Mammary epithelial cell (primary cell): ENCODE measurements at regions of chr11 and their contacts with region 1.

Region 1: DNA sequence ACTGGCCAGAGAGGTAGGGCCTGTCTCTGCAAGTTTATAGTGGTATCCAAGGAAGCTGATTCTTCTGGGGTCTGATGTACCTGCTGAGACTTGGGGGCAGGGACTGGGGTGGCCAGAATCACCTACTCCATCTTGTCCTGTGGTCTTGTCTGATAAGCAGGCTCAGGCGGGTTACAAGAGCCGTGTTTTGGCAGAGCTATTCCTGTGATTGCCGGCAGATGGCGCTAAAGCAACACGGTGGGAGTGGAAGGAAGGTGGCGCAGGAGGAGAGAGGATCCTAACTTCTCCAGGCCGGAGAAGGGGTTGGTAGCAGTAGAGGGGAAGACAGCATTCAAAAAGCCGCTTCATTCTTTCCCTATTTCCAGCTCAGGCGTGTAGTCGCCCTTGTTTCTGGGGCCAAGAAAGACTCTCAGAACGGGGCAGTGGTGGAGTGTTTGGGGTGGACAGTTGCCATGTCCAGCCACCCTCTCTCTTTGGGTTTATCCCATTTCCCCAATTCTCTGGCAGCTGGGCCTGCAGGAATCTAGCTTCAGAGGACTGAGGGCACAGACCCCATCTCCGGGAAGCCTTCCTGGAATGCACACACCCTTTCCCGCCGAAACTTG is 15.1 kb downstream of the CHRM1 start:
- DNase-seq: peak; percentile 69
- H3K4me3 ChIP-seq: no peak overlapping the region
- H3K27ac ChIP-seq: no peak overlapping the region
- H3K4me1 ChIP-seq: peaks cover 4% of the 10 kb centered on the region
- H3K27me3 ChIP-seq: no peaks in the 10 kb centered on the region
- CTCF ChIP-seq: peak; percentile 99 to 100

Region 2: GRCh38 chr11:62831520-62832335 is 74.3 kb before region 1 on chr11 and contains the start of gene STX5:
- CTCF ChIA-PET with region 1: no interaction called
- dilution Hi-C with region 1: no loop called
- in situ Hi-C with region 1: no loop called
- intact Hi-C with region 1: no loop called
- DNase-seq: peak; percentile 97
- H3K4me3 ChIP-seq: peak within 1 kb of the TSS; percentile 59 to 84 (median 75)
- H3K27ac ChIP-seq: peak within 1 kb of the TSS; percentile 87
- H3K4me1 ChIP-seq: peaks cover 19% of the 10 kb centered on the region
- H3K27me3 ChIP-seq: no peaks in the 10 kb centered on the region
- CTCF ChIP-seq: no peak
- total RNA-seq, gene STX5: 26.7 to 44.1 TPM

Region 3: DNA sequence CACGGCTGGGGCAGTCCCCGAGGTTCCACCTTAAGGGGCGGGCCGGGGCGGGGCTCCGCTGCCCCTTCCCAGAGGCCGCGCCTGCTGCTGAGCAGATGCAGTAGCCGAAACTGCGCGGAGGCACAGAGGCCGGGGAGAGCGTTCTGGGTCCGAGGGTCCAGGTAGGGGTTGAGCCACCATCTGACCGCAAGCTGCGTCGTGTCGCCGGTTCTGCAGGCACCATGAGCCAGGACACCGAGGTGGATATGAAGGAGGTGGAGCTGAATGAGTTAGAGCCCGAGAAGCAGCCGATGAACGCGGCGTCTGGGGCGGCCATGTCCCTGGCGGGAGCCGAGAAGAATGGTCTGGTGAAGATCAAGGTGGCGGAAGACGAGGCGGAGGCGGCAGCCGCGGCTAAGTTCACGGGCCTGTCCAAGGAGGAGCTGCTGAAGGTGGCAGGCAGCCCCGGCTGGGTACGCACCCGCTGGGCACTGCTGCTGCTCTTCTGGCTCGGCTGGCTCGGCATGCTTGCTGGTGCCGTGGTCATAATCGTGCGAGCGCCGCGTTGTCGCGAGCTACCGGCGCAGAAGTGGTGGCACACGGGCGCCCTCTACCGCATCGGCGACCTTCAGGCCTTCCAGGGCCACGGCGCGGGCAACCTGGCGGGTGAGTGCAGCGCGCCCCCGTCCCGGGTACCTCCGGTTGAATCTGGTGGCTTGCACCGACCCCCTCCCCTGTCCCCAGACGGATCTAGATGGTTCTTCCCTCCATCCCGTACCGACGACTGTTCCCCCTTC is 25.0 kb before region 1 on chr11 and contains the start of gene SLC3A2:
- CTCF ChIA-PET with region 1: interaction called, 15 read pairs
- dilution Hi-C with region 1: no loop called
- in situ Hi-C with region 1: no loop called
- intact Hi-C with region 1: no loop called
- DNase-seq: peak; percentile 88
- H3K4me3 ChIP-seq: peak within 1 kb of the TSS; percentile 90 to 96 (median 91)
- H3K27ac ChIP-seq: peak within 1 kb of the TSS; percentile 99
- H3K4me1 ChIP-seq: peaks cover 41% of the 10 kb centered on the region
- H3K27me3 ChIP-seq: no peaks in the 10 kb centered on the region
- CTCF ChIP-seq: peak; percentile 32 to 72
- total RNA-seq, gene SLC3A2: 1,418 to 1,465 TPM

Region 4: GRCh38 chr11:62974848-62975522 is 69.0 kb after region 1 on chr11:
- CTCF ChIA-PET with region 1: interaction called, 3 read pairs
- dilution Hi-C with region 1: no loop called
- in situ Hi-C with region 1: no loop called
- intact Hi-C with region 1: loop called (anchors 1 kb)
- DNase-seq: no peak
- H3K4me3 ChIP-seq: no peak overlapping the region
- H3K27ac ChIP-seq: no peak overlapping the region
- H3K4me1 ChIP-seq: no peaks in the 10 kb centered on the region
- H3K27me3 ChIP-seq: no peaks in the 10 kb centered on the region
- CTCF ChIP-seq: peak; percentile 33 to 44

Region 5: GRCh38 chr11:63023841-63024648 is 118.0 kb after region 1 on chr11:
- CTCF ChIA-PET with region 1: interaction called, 10 read pairs
- dilution Hi-C with region 1: no loop called
- in situ Hi-C with region 1: loop called (anchors 5 kb)
- intact Hi-C with region 1: loop called (anchors 1 kb)
- DNase-seq: peak; percentile 52
- H3K4me3 ChIP-seq: no peak overlapping the region
- H3K27ac ChIP-seq: no peak overlapping the region
- H3K4me1 ChIP-seq: no peaks in the 10 kb centered on the region
- H3K27me3 ChIP-seq: no peaks in the 10 kb centered on the region
- CTCF ChIP-seq: peak; percentile 98 to 100

Region 6: GRCh38 chr11:63212742-63213141 is 306.7 kb after region 1 on chr11:
- CTCF ChIA-PET with region 1: no interaction called
- dilution Hi-C with region 1: loop called (anchors 25 kb)
- in situ Hi-C with region 1: loop called (anchors 10 to 25 kb)
- intact Hi-C with region 1: loop called (anchors 1 kb)
- DNase-seq: peak; percentile 9
- H3K4me3 ChIP-seq: no peak overlapping the region
- H3K27ac ChIP-seq: no peak overlapping the region
- H3K4me1 ChIP-seq: no peaks in the 10 kb centered on the region
- H3K27me3 ChIP-seq: no peaks in the 10 kb centered on the region
- CTCF ChIP-seq: peak; percentile 49 to 50

Region 7: DNA sequence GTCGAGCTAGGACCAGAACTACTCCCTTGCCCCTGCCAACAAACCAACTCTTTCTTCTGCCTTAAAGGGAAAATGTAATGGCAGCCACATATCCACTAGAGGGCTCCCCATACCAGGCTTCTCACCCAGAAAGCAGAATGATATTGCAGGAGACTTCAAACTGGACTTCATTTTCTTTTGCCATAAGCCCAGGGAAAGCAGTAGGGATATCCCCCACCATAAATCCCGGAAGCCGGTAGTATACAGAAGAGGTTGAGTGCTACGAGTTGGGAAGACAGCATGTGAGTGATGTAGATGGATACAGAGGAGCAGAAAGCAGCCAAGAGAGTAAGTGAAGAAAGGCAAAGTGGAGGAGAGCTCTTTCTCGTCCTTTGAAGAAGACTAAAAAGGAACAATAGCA is 572.9 kb after region 1 on chr11:
- CTCF ChIA-PET with region 1: interaction called, 5 read pairs
- dilution Hi-C with region 1: no loop called
- in situ Hi-C with region 1: no loop called
- intact Hi-C with region 1: loop called (anchors 5 kb)
- DNase-seq: peak; percentile 44
- H3K4me3 ChIP-seq: no peak overlapping the region
- H3K27ac ChIP-seq: no peak overlapping the region
- H3K4me1 ChIP-seq: peaks cover 3% of the 10 kb centered on the region
- H3K27me3 ChIP-seq: no peaks in the 10 kb centered on the region
- CTCF ChIP-seq: peak; percentile 90 to 96